Sigmoid colon (tissue), 7 donors: ENCODE measurements at regions of chr4 and their contacts with region 1.

Region 1: DNA sequence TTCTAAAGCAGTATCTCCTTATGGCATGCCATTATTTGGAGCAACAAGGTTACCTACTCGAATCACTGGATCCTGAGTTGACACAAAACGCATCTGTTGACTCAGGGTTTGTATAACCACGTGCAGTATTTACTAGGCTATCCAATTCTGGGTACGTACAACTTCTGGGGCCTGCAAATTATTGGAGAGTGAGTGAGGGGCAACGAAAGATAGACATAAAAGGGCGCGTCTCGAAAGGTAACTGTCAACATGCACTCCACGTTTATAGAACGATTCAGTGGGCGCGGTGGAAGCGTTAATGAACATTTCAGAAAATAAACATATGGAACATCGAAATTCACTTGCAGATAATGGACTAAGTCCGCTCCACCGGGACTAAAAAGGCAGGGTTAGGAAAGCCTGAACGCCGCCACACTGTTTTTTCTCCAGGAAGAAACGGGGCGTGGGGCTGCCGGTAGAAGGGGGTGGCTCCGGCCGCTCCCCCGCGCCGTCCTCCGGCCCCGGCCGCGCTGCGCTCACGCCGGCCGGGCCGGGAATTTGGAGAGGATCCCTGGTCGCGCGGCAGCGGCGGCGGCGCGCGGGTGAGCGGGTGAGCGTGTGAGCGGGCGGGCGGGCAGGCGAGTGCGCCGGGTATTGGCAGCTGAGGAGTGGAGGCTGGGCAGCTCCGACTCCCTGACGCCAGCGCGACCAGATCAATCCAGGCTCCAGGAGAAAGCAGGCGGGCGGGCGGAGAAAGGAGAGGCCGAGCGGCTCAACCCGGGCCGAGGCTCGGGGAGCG is at the start of gene SMAD1:
- DNase-seq: peak; percentile 90
- H3K4me3 ChIP-seq: peak within 1 kb of the TSS; percentile 82 to 97 (median 91)
- H3K27ac ChIP-seq: peak within 1 kb of the TSS; percentile 97 to 99 (median 98)
- H3K4me1 ChIP-seq: peaks cover 0 to 33% (median 20%) of the 10 kb centered on the region in 4 donors
- H3K27me3 ChIP-seq: no peaks in the 10 kb centered on the region
- CTCF ChIP-seq: no peak
- EP300 ChIP-seq: no peak
- POLR2A ChIP-seq: no peak
- total RNA-seq, gene SMAD1: 25.8 to 45.7 (median 33.4) TPM

Region 2: DNA sequence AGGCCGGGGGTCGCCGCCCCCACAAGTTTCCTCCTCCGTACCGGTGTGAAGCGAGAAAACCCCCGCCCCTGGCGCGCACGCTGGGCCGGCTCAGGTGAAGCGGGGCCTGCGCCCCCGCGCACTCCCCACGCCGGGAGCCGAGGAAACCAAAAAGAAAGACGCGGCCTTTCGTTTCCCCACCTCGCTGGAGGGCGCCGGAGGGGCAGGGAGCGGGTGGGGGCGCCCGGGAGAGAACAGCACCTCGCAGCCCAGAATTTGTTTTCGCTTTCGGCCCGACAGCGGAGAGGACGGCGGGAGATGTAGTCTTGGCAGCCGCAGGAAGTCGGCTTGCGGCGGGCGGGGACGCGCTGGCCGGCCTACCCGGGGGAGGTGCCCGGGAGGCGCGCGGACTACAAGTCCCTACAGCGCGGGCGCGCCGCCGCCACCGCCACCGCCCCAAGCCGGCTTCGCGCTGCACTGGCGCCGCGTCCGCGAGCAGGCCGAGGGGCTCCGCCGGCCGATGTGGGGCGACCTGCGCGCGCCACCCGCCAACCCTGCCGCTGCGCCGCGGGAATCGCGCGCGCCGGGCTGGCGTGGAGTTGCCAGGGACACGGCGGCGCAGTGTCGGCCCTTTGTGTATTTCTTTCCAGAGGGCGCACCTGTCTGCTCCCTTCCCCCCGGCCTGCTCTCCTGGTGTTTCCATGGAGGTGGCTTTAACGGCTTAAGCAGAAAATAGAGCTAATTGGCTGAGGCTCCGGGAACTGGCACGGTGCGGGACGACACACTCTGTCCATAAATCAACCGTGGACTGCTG is 300.9 kb before region 1 on chr4 and contains the start of gene OTUD4:
- intact Hi-C with region 1: loop called (anchors 2 kb)
- DNase-seq: peak; percentile 98
- H3K4me3 ChIP-seq: peak within 1 kb of the TSS; percentile 85 to 98 (median 91)
- H3K27ac ChIP-seq: peak within 1 kb of the TSS; percentile 97 to 99 (median 98)
- H3K4me1 ChIP-seq: peaks cover 0 to 40% (median 32%) of the 10 kb centered on the region in 4 donors
- H3K27me3 ChIP-seq: no peaks in the 10 kb centered on the region
- CTCF ChIP-seq: no peak
- EP300 ChIP-seq: no peak
- POLR2A ChIP-seq: peak; percentile 61 to 67
- total RNA-seq, gene OTUD4: 27.7 to 31.7 (median 29.8) TPM

Region 3: DNA sequence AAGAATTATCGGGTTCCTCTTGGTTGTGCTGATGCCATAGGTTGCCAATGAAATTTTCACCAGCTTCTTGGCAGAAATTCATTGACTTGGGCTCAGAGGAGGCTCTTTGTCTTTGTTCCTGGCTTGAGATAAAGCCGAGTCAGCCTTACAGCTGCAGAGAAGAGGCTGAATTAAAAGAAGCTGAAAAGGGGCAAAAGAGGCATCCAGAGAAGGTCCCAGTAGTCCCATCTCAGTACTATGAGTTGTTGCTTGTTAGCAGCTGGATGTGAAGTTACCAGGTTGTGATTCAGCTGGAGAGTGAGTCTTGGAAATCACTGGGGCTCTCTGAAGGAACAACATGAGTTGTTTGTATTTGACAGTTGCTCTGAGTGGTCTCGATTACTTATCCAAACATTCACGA is 60.0 kb after region 1 on chr4:
- intact Hi-C with region 1: loop called (anchors 5 kb)
- DNase-seq: no peak
- H3K4me3 ChIP-seq: no peak overlapping the region
- H3K27ac ChIP-seq: no peak overlapping the region
- H3K4me1 ChIP-seq: peaks cover 0 to 32% (median 12%) of the 10 kb centered on the region in 4 donors
- H3K27me3 ChIP-seq: no peaks in the 10 kb centered on the region
- CTCF ChIP-seq: no peak
- EP300 ChIP-seq: no peak
- POLR2A ChIP-seq: no peak

Region 4: DNA sequence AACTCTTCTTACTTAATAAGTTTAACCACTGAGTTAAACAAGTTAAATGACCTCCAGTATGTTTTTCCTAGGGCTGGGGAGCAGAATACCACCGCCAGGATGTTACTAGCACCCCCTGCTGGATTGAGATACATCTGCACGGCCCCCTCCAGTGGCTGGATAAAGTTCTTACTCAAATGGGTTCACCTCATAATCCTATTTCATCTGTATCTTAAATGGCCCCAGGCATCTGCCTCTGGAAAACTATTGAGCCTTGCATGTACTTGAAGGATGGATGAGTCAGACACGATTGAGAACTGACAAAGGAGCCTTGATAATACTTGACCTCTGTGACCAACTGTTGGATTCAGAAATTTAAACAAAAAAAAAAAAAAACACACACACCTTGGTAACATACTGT is 76.4 kb after region 1 on chr4:
- intact Hi-C with region 1: loop called (anchors 2 kb)
- DNase-seq: peak; percentile 79
- H3K4me3 ChIP-seq: no peak overlapping the region
- H3K27ac ChIP-seq: no peak overlapping the region
- H3K4me1 ChIP-seq: peaks cover 0 to 3% (median 0%) of the 10 kb centered on the region in 4 donors
- H3K27me3 ChIP-seq: no peaks in the 10 kb centered on the region
- CTCF ChIP-seq: peak; percentile 50 to 91 (median 79)
- EP300 ChIP-seq: no peak
- POLR2A ChIP-seq: no peak